Mammary epithelial cell (primary cell): ENCODE measurements at regions of chr12 and their contacts with region 1.

Region 1: DNA sequence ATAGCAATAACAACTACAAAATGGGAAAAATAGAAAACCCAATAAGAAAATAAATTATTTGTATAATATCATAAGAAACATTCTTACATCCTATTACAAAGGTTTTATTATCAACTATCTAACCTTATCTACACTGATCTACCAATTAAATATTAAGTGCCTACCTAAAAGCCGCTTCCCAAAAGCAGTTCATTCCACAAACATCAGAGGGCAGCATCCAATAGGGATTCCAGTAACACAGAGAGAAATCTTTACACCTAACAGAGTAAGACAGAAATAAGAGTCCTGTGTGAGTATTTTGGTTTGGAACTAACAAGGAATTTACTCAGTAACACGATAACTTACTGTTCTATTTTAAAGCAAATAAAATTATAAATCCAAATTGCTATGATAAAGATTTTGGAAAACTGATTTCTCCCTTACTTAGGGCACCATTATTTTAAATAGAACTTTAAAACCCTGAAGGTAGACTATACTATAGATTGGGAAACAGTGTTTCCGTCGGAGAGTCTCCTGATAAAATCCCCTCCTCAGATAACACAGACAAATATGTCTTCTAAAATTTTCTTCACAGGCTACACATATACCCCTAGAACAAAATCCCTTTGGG is 15.0 kb downstream of the GXYLT1 start:
- DNase-seq: peak; percentile 61
- H3K4me3 ChIP-seq: no peak overlapping the region
- H3K27ac ChIP-seq: peak overlapping the region; percentile 75
- H3K4me1 ChIP-seq: peaks cover 25% of the 10 kb centered on the region
- H3K27me3 ChIP-seq: no peaks in the 10 kb centered on the region
- CTCF ChIP-seq: peak; percentile 80 to 88

Region 2: DNA sequence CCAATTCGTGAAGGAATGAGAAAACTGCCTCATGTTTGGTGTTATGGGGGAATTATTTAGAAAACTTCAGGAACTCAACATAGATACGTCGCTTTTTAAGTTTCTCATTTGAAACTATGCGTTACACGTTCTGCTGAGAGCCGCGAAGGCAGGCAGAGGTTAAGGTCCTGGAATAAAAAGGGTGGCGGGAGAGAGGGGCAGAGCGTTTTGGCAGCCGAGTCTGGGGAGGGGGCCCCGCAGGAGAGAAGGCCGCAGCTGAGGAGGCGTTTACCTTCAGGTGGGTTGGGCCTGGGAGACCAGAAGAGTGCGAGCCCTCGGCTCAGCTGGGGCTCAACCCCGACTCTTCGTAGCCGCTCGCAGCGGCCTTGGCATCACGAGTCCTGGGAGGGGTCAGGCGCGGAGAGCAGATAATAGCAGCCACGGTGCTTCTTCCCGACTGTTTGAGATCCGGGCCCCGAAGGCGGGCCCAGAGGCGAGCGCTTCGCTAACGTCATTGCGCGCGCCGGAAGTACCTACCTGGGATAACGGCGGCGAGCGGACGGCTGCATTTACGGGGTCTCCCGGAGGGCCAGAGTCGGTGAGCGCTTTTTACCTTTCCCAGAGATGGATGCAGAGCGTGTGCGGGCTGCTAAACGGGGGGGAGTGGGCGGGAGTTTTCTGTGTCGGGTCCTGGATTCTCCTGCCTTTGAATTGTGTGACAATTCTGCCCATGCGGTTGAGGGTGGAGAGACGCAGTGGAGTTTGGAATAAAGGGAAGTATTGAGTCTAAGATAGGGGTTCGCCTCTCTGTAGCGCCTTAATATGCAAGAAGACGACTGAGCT is 196.2 kb after region 1 on chr12 and contains the starts of genes PPHLN1 and ZCRB1:
- CTCF ChIA-PET with region 1: no interaction called
- dilution Hi-C with region 1: no loop called
- in situ Hi-C with region 1: loop called (anchors 5 kb)
- intact Hi-C with region 1: no loop called
- DNase-seq: peak; percentile 83
- H3K4me3 ChIP-seq: peak within 1 kb of the TSS; percentile 64 to 88 (median 77)
- H3K27ac ChIP-seq: peak within 1 kb of the TSS; percentile 88
- H3K4me1 ChIP-seq: peaks cover 13% of the 10 kb centered on the region
- H3K27me3 ChIP-seq: no peaks in the 10 kb centered on the region
- CTCF ChIP-seq: no peak
- total RNA-seq, gene PPHLN1: 64.2 to 74.3 TPM
- total RNA-seq, gene ZCRB1: 24.5 to 49.0 TPM

Region 3: DNA sequence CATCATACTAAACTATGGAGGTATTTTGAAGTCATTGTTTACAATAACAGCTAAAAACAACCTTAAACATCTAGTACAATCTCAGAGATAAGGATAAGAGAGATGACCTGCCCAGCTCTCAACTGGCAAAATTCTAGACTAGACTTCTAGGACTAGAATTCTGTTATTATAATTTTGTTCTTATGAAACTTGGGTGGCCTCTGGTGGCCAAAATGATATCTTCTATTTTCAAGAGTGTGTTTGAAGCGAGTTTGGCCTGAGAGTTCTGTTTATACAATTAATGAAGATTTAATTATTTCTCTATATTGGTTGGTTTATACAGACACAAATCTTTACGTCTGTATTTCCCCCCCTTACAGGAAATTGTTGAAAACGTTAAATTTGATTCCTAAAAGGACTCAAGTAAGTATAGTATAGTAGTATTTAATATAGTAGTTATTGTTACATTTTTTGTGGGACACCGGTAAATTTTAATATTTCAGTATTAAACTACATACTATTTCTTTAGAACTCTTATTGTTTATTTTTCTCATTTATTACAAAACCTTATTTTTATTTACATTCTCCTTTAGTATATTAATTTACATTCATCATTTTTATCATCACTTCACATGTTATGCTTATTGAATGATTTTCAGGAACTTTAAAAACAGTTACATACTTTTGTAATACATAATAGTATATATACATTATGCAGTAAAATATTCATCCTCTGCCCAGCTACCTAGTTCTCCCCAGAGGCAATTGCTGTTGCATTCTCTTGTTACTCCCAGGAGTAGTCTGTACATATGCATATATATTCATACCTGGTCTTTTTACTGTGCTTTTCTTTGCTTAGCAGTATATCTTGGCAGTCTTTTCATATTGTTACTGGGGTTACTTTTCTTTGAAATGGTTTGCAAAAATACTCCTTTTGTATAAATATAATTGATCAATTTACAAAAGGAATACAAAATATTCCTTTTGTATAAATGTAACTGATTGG is 202.9 kb after region 1 on chr12:
- CTCF ChIA-PET with region 1: no interaction called
- dilution Hi-C with region 1: no loop called
- in situ Hi-C with region 1: loop called (anchors 5 kb)
- intact Hi-C with region 1: loop called (anchors 1 kb)
- DNase-seq: peak; percentile 26
- H3K4me3 ChIP-seq: no peak overlapping the region
- H3K27ac ChIP-seq: no peak overlapping the region
- H3K4me1 ChIP-seq: peaks cover 6% of the 10 kb centered on the region
- H3K27me3 ChIP-seq: no peaks in the 10 kb centered on the region
- CTCF ChIP-seq: peak; percentile 46 to 57

Region 4: GRCh38 chr12:42360747-42361403 is 231.2 kb after region 1 on chr12:
- CTCF ChIA-PET with region 1: no interaction called
- dilution Hi-C with region 1: loop called (anchors 10 kb)
- in situ Hi-C with region 1: no loop called
- intact Hi-C with region 1: no loop called
- DNase-seq: no peak
- H3K4me3 ChIP-seq: no peak overlapping the region
- H3K27ac ChIP-seq: no peak overlapping the region
- H3K4me1 ChIP-seq: peaks cover 10% of the 10 kb centered on the region
- H3K27me3 ChIP-seq: no peaks in the 10 kb centered on the region
- CTCF ChIP-seq: no peak

Region 5: DNA sequence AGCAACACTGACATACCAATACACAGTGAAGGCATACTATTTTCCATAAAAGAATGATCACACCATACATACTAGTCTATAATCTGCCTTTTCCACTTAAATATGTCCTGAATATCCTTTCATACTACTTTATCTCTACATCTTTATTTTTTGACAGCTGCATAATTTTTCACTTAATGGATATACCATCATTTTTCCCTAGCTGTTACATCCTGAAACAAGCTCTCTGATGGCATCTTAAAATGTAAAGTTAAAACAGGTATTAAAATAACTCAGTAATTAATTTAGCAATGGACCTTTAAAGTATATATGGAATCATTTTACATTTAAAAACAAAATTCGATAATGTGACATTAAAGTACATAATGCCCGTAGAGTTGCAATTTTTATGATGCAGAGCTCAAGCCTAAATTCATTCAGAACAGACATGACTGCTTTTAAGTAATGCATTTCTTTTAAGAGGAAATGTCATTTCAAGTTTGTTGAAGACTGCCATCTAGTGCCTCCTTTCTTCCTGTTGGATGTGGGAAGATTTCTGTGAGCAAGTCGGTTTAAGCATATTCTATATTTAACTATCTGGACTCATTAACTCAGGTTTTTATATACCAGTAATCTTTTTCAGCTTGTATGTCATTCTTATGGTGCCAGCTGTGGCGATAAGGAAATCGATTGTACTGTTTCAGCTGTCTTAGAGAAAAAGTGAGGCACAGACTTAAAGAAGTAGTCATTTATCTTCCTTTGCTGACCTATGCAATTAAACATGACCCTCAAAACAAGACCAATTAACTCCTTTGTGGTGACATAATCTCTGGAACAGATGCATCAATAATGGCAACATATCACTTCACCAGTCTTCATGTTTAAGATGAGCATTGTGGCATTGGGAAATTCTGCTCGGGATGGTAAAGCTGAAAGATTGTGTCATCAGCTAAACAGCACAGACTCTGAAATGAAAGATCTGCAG is 439.5 kb after region 1 on chr12:
- CTCF ChIA-PET with region 1: no interaction called
- dilution Hi-C with region 1: no loop called
- in situ Hi-C with region 1: loop called in 1 of 2 experiments (anchors 25 kb)
- intact Hi-C with region 1: loop called (anchors 1 kb)
- DNase-seq: peak; percentile 48
- H3K4me3 ChIP-seq: no peak overlapping the region
- H3K27ac ChIP-seq: no peak overlapping the region
- H3K4me1 ChIP-seq: peaks cover 8% of the 10 kb centered on the region
- H3K27me3 ChIP-seq: no peaks in the 10 kb centered on the region
- CTCF ChIP-seq: peak; percentile 37 to 65